ENCODE measurements at regions of chr4 and their contacts with region 1.

Region 1: GRCh38 chr4:163166041-163166579 is 580 bp downstream of the NAF1 start:
- DNase-seq: peak; percentile 40
- H3K4me3 Mint-ChIP-seq: peak overlapping the region; percentile 89
- H3K27ac Mint-ChIP-seq: peak overlapping the region; percentile 97
- H3K4me1 Mint-ChIP-seq: peaks cover 46% of the 10 kb centered on the region
- H3K27me3 Mint-ChIP-seq: no peaks in the 10 kb centered on the region

Region 2: GRCh38 chr4:162891788-162892707 is 274.1 kb before region 1 on chr4:
- intact Hi-C with region 1: loop called (anchors 5 kb)
- DNase-seq: no peak
- H3K4me3 Mint-ChIP-seq: no peak overlapping the region
- H3K27ac Mint-ChIP-seq: no peak overlapping the region
- H3K4me1 Mint-ChIP-seq: peaks cover 9% of the 10 kb centered on the region
- H3K27me3 Mint-ChIP-seq: peaks cover 14% of the 10 kb centered on the region

Region 3: DNA sequence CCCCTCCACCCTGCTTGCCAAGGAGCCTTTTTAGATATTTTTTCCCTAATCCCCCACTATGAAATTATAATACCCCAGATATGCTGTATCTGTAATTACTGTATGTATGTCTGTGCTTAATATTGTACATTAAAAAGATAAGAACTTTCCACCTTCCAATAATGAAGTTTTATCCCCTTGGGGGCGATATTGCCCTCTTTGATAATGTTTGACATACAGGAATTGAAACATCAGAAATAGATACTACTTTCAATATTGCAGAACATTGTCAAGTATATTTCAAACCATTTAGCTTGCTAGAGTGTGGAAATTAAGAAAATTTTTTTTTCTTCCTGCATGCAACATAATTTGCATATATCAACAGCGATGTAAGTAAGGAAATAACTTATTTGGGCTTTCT is 58.4 kb before region 1 on chr4:
- intact Hi-C with region 1: loop called (anchors 2 kb)
- DNase-seq: no peak
- H3K4me3 Mint-ChIP-seq: no peak overlapping the region
- H3K27ac Mint-ChIP-seq: no peak overlapping the region
- H3K4me1 Mint-ChIP-seq: peaks cover 23% of the 10 kb centered on the region
- H3K27me3 Mint-ChIP-seq: no peaks in the 10 kb centered on the region

Region 4: GRCh38 chr4:163494360-163495162 is 328.5 kb after region 1 on chr4 and contains the start of gene TMA16:
- intact Hi-C with region 1: loop called (anchors 1 kb)
- DNase-seq: peak; percentile 84
- H3K4me3 Mint-ChIP-seq: peak within 1 kb of the TSS; percentile 90
- H3K27ac Mint-ChIP-seq: peak within 1 kb of the TSS; percentile 98
- H3K4me1 Mint-ChIP-seq: peaks cover 23% of the 10 kb centered on the region
- H3K27me3 Mint-ChIP-seq: peaks cover 3% of the 10 kb centered on the region
- total RNA-seq, gene TMA16: 76.3 and 80.8 TPM in 2 replicates

Measured in activated T-helper 1 cell treated with anti-CD3 and anti-CD28 coated beads, Interleukin-12 subunit alpha, Interleukin-12 subunit beta, Interleukin-2, Interleukin-4 antibody, amounts not matched to agents 30 ng/mL and 10 ng/mL and 1 ng/mL, durations not matched to agents 14 hours and 24 hours and 36 hours (primary cell).